Activated B cell treated with CpG ODN at 0.5 μM for 24 hours (primary cell): ENCODE measurements at regions of chr18 and their contacts with region 1.

Region 1: DNA sequence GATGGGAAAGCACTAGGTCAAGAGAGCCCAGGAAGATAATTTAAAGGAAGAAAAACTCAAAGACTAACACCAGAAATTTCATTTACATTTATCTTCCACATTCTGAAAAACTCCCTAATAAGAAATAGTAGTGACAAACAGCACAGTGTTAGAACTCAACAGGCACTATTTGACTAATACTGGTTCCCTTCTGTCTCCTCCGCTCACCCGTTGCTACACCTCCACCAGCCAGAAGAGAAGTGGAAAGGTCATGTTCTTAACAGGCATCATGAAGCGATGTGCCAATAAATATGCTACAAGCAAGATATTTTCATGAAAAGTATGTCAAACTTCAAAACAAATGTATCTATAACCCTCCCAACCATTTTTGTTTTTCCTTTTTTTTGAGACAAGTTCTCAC is 5.7 kb downstream of the ROCK1 start:
- DNase-seq: no peak
- ATAC-seq: peak; percentile 53
- H3K4me3 Mint-ChIP-seq: peak overlapping the region; percentile 29
- H3K27ac Mint-ChIP-seq: peak overlapping the region; percentile 10
- H3K4me1 Mint-ChIP-seq: peaks cover 39% of the 10 kb centered on the region
- H3K27me3 Mint-ChIP-seq: no peaks in the 10 kb centered on the region
- CTCF ChIP-seq: no peak

Region 2: DNA sequence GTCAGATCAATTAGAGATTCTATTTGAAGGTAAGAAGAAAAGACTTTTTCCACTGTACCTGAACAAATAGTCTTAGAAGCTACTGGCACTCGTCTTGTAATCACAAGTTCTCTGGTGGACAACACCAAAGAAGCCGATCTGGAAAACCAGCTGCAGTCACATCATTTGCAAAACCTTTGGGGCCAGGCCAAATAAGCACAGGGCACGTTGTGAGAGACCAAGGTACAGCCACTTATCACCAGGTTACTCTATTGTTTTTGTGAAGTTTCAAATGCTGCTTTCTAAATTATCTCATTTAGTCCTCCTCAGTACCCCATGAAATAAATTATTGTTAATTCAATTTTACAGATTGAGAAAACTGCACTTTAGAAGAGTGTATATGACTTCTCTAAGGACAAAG is 12.8 kb before region 1 on chr18:
- CTCF ChIA-PET with region 1: no interaction called
- POLR2A ChIA-PET with region 1: interaction called, 23 read pairs
- intact Hi-C with region 1: loop called (anchors 2 kb)
- DNase-seq: no peak
- ATAC-seq: no peak
- H3K4me3 Mint-ChIP-seq: no peak overlapping the region
- H3K27ac Mint-ChIP-seq: no peak overlapping the region
- H3K4me1 Mint-ChIP-seq: peaks cover 67% of the 10 kb centered on the region
- H3K27me3 Mint-ChIP-seq: no peaks in the 10 kb centered on the region
- CTCF ChIP-seq: no peak

Region 3: GRCh38 chr18:21141668-21142422 is 35.9 kb after region 1 on chr18:
- CTCF ChIA-PET with region 1: no interaction called
- POLR2A ChIA-PET with region 1: no interaction called
- intact Hi-C with region 1: no loop called
- DNase-seq: no peak
- ATAC-seq: no peak
- H3K4me3 Mint-ChIP-seq: no peak overlapping the region
- H3K27ac Mint-ChIP-seq: no peak overlapping the region
- H3K4me1 Mint-ChIP-seq: no peaks in the 10 kb centered on the region
- H3K27me3 Mint-ChIP-seq: no peaks in the 10 kb centered on the region
- CTCF ChIP-seq: no peak

Region 4: GRCh38 chr18:21203096-21203495 is 97.2 kb after region 1 on chr18:
- CTCF ChIA-PET with region 1: no interaction called
- POLR2A ChIA-PET with region 1: no interaction called
- intact Hi-C with region 1: no loop called
- DNase-seq: no peak
- ATAC-seq: no peak
- H3K4me3 Mint-ChIP-seq: no peak overlapping the region
- H3K27ac Mint-ChIP-seq: no peak overlapping the region
- H3K4me1 Mint-ChIP-seq: no peaks in the 10 kb centered on the region
- H3K27me3 Mint-ChIP-seq: peaks cover 4% of the 10 kb centered on the region
- CTCF ChIP-seq: no peak